ENCODE measurements at regions of chr12 and their contacts with region 1.

Region 1: GRCh38 chr12:118120579-118121363 is 15.2 kb upstream of the PEBP1 start:
- DNase-seq: peak; percentile 40
- H3K4me3 ChIP-seq: no peak overlapping the region
- H3K27ac ChIP-seq: no peak overlapping the region
- H3K4me1 ChIP-seq: peaks cover 3% of the 10 kb centered on the region
- H3K27me3 ChIP-seq: no peaks in the 10 kb centered on the region
- CTCF ChIP-seq: peak; percentile 37 to 64

Region 2: GRCh38 chr12:117165342-117165741 is 955.4 kb before region 1 on chr12:
- CTCF ChIA-PET with region 1: interaction called, 13 read pairs
- dilution Hi-C with region 1: no loop called
- in situ Hi-C with region 1: no loop called
- intact Hi-C with region 1: no loop called
- DNase-seq: no peak
- H3K4me3 ChIP-seq: no peak overlapping the region
- H3K27ac ChIP-seq: no peak overlapping the region
- H3K4me1 ChIP-seq: no peaks in the 10 kb centered on the region
- H3K27me3 ChIP-seq: no peaks in the 10 kb centered on the region
- CTCF ChIP-seq: no peak

Region 3: GRCh38 chr12:118073768-118074167 is 47.0 kb before region 1 on chr12:
- CTCF ChIA-PET with region 1: no interaction called
- dilution Hi-C with region 1: no loop called
- in situ Hi-C with region 1: no loop called
- intact Hi-C with region 1: no loop called
- DNase-seq: no peak
- H3K4me3 ChIP-seq: no peak overlapping the region
- H3K27ac ChIP-seq: no peak overlapping the region
- H3K4me1 ChIP-seq: no peaks in the 10 kb centered on the region
- H3K27me3 ChIP-seq: no peaks in the 10 kb centered on the region
- CTCF ChIP-seq: no peak

Region 4: GRCh38 chr12:118618692-118619091 is 497.9 kb after region 1 on chr12:
- CTCF ChIA-PET with region 1: no interaction called
- dilution Hi-C with region 1: no loop called
- in situ Hi-C with region 1: no loop called
- intact Hi-C with region 1: no loop called
- DNase-seq: no peak
- H3K4me3 ChIP-seq: no peak overlapping the region
- H3K27ac ChIP-seq: no peak overlapping the region
- H3K4me1 ChIP-seq: no peaks in the 10 kb centered on the region
- H3K27me3 ChIP-seq: no peaks in the 10 kb centered on the region
- CTCF ChIP-seq: no peak